HCT116 (cell line): ENCODE measurements at regions of chr7 and their contacts with region 1.

Region 1: GRCh38 chr7:99997545-99998137 is 17.8 kb upstream of the ZKSCAN1 start:
- DNase-seq: no peak
- ATAC-seq: no peak
- H3K4me3 ChIP-seq: no peak overlapping the region
- H3K27ac ChIP-seq: no peak overlapping the region
- H3K4me1 ChIP-seq: peaks cover 0 to 5% of the 10 kb centered on the region in 2 experiments; a peak in 2 of 4 replicates
- H3K27me3 ChIP-seq: no peaks in the 10 kb centered on the region
- CTCF ChIP-seq: no peak
- POLR2A ChIP-seq: no peak
- RAD21 ChIP-seq: no peak

Region 2: DNA sequence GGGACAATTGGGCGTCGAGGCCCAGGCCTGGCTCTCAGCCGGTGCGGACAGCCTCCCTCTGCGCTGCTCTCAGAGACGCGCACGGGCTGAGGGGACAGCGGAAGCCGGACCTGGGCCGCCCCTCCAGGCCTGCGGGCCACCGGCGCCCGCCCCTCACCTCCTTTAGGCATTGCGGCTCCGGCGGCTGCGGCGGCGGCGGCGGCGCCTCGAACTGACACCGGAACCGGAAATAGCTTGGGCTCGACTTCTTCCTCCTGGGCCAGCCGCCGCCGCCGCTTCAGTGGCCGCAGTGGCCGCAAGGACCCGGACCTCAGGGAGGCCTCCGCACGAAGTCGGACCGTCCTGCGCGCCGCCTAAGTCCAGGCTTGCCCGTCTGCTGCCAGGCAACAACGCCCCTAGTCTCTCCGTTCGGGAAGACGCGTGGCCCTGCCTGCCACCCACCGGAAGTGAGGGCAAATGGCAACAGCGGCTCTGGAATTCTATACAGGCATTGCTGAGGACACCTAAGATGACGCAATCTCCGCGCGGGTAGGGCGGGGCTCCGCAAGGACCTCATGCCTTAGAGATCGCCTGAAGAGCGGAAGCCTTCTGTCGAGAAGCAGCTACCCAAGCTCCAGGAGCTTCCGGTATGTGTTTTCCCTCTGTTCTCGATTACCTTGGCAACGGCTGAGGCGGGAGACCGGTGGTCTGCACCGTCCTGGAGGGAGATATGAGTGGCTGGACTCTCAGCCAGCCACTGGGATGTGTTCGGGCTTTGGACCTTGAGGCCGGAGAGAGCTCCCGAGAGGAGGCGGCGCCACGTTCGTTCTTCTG is 589.1 kb before region 1 on chr7 and contains the starts of genes BUD31 and PDAP1:
- CTCF ChIA-PET with region 1: no interaction called
- POLR2A ChIA-PET with region 1: no interaction called
- RAD21 ChIA-PET with region 1: no interaction called
- intact Hi-C with region 1: no loop called
- DNase-seq: peak; percentile 89
- ATAC-seq: peak; percentile 86
- H3K4me3 ChIP-seq: peak within 1 kb of the TSS; percentile 92 to 100
- H3K27ac ChIP-seq: peak within 1 kb of the TSS; percentile 94
- H3K4me1 ChIP-seq: peaks cover 13 to 19% of the 10 kb centered on the region in 2 experiments; a peak in 3 of 4 replicates
- H3K27me3 ChIP-seq: no peaks in the 10 kb centered on the region
- CTCF ChIP-seq: no peak
- POLR2A ChIP-seq: peak; percentile 93
- RAD21 ChIP-seq: no peak
- total RNA-seq, gene BUD31: 154 TPM
- total RNA-seq, gene PDAP1: 200 TPM

Region 3: DNA sequence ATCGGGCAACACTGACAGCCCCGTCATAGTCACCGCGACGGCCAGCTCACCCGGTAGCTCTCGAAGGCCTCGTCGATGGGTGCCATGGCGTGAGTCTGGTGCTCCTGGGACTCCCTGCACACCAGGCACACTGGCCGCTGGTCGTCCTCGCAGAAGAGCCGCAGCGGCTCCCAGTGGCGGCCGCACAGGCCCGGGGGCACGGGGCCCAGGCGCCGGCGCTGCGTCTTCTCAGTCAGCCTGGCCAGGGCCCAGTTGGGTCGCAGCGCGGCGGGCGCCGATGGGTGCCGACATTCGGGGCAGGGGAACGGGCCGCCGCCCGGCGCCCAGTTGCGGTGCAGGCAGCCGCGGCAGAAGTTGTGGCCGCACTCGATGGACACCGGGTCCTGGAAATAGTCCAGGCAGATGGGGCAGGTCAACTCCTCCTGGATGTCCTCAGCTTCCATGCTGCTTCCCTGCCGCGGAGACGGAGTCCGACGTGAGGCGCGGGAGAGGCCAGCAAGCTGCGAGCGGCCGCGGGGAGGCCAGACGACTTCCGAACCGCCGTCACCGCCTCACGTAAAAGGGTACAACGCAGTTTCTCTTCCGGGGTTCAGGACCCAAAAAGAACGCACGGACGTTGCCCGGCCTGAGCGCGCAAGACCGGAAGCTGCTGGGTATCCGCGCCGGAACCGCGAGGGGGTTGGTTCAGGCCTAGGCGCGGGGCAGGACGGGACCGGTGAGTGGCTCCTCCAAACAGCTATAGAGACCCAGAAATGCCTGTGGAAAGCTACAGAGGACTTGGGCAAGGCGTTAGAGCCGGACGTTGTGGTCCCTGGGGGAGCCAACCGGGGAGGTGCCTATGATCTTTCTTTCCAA is 78.5 kb before region 1 on chr7 and contains the start of gene TRIM4:
- CTCF ChIA-PET with region 1: interaction called, 15 read pairs
- POLR2A ChIA-PET with region 1: no interaction called
- RAD21 ChIA-PET with region 1: no interaction called
- intact Hi-C with region 1: no loop called
- DNase-seq: peak; percentile 85
- ATAC-seq: peak; percentile 100
- H3K4me3 ChIP-seq: peak within 1 kb of the TSS; percentile 60 to 86
- H3K27ac ChIP-seq: peak within 1 kb of the TSS; percentile 90
- H3K4me1 ChIP-seq: peaks cover 9 to 16% of the 10 kb centered on the region in 2 experiments
- H3K27me3 ChIP-seq: no peaks in the 10 kb centered on the region
- CTCF ChIP-seq: no peak; a peak in 1 of 6 replicates
- POLR2A ChIP-seq: peak; percentile 37
- RAD21 ChIP-seq: 0 out of 2 replicates have a peak, but pooled peaks have one; percentile 15
- total RNA-seq, gene TRIM4: 25.1 TPM

Region 4: GRCh38 chr7:100049441-100050311 is 52.0 kb after region 1 on chr7 and contains the start of gene ZSCAN21:
- CTCF ChIA-PET with region 1: interaction called, 14 read pairs
- POLR2A ChIA-PET with region 1: no interaction called
- RAD21 ChIA-PET with region 1: interaction called in 1 of 2 experiments, 4 read pairs
- intact Hi-C with region 1: loop called (anchors 1 kb)
- DNase-seq: peak; percentile 38
- ATAC-seq: peak; percentile 90
- H3K4me3 ChIP-seq: peak within 1 kb of the TSS; percentile 78 to 82
- H3K27ac ChIP-seq: peak within 1 kb of the TSS; percentile 77
- H3K4me1 ChIP-seq: peaks cover 10 to 16% of the 10 kb centered on the region in 2 experiments; a peak in 2 of 4 replicates
- H3K27me3 ChIP-seq: no peaks in the 10 kb centered on the region
- CTCF ChIP-seq: 0 out of 6 replicates have a peak, but pooled peaks of 1 of the 3 experiments have one; percentile 16
- POLR2A ChIP-seq: peak; percentile 54
- RAD21 ChIP-seq: peak; percentile 28; the same call in 1 of the 2 replicates
- total RNA-seq, gene ZSCAN21: 10.3 TPM

Region 5: GRCh38 chr7:100081535-100082102 is 84.0 kb after region 1 on chr7 and contains the start of gene ZNF3:
- CTCF ChIA-PET with region 1: interaction called, 6 read pairs
- POLR2A ChIA-PET with region 1: interaction called, 5 read pairs
- RAD21 ChIA-PET with region 1: no interaction called
- intact Hi-C with region 1: loop called (anchors 1 kb)
- DNase-seq: peak; percentile 98
- ATAC-seq: peak; percentile 91
- H3K4me3 ChIP-seq: peak within 1 kb of the TSS; percentile 69 to 77
- H3K27ac ChIP-seq: peak within 1 kb of the TSS; percentile 72
- H3K4me1 ChIP-seq: peaks cover 11 to 24% of the 10 kb centered on the region in 2 experiments
- H3K27me3 ChIP-seq: no peaks in the 10 kb centered on the region
- CTCF ChIP-seq: peak in 2 of 3 experiments; percentile 84 to 85; a peak in 4 of 6 replicates
- POLR2A ChIP-seq: peak; percentile 58
- RAD21 ChIP-seq: no peak
- total RNA-seq, gene ZNF3: 28.2 TPM

Region 6: GRCh38 chr7:100469227-100470044 is 471.8 kb after region 1 on chr7:
- CTCF ChIA-PET with region 1: no interaction called
- POLR2A ChIA-PET with region 1: no interaction called
- RAD21 ChIA-PET with region 1: no interaction called
- intact Hi-C with region 1: no loop called
- DNase-seq: no peak
- ATAC-seq: peak; percentile 85
- H3K4me3 ChIP-seq: no peak overlapping the region
- H3K27ac ChIP-seq: peak overlapping the region; percentile 52
- H3K4me1 ChIP-seq: peaks cover 22 to 43% of the 10 kb centered on the region in 2 experiments
- H3K27me3 ChIP-seq: no peaks in the 10 kb centered on the region
- CTCF ChIP-seq: peak; percentile 80 to 95 (median 91)
- POLR2A ChIP-seq: no peak
- RAD21 ChIP-seq: peak; percentile 93